Activated CD8-positive, alpha-beta T cell treated with anti-CD3 and anti-CD28 coated beads for 36 hours (primary cell): ENCODE measurements at regions of chr15 and their contacts with region 1.

Region 1: DNA sequence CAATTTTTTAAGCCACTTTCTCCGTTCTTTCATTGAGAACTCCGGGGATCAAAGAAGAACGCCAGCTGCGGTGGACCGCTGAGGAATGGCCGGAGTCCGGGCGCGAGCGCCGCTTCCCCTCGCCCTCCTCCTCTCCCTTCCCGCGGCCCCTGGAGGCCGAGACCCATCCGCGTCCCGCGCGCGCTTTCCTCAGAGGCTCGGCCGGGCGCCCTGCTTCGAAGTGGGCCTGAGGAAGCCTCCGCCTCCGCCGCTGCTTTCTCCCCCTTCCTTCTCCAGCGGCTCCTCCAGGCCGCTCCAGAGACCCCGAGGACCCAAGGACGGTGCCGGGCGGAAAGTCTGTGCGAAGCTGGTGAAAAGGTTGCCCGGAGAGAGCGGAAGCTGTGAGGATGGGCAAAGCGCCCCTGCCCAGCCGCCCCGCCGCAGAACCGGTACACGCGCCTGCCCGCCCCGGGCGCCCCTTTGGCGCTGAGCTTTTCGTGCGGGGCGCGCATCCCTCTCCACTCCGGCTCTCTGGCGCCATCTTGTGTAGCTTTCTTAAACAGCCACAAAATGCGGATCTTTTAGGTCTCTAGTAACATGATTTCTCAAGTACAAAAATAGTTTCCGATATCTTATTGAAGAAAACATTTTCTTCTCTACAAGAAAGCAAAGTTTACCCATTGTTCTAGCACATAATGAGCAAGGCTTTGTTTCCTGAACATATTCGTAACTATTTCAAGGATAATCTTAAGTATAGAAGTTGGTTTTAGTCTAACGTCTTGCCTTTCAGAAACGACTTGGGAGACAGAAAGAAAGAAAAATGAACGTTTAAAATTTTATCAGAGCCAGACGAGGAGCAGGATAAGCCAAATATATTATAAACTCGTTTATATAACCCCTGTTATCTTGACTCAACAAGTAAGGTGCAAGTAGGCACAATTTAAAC is 59.2 kb upstream of the FAM174B start:
- DNase-seq: peak; percentile 83
- ATAC-seq: peak; percentile 92
- H3K4me3 Mint-ChIP-seq: peak overlapping the region; percentile 55
- H3K27ac Mint-ChIP-seq: no peak overlapping the region
- H3K4me1 Mint-ChIP-seq: peaks cover 5% of the 10 kb centered on the region
- H3K27me3 Mint-ChIP-seq: peaks cover 15% of the 10 kb centered on the region
- CTCF ChIP-seq: peak; percentile 98

Region 2: DNA sequence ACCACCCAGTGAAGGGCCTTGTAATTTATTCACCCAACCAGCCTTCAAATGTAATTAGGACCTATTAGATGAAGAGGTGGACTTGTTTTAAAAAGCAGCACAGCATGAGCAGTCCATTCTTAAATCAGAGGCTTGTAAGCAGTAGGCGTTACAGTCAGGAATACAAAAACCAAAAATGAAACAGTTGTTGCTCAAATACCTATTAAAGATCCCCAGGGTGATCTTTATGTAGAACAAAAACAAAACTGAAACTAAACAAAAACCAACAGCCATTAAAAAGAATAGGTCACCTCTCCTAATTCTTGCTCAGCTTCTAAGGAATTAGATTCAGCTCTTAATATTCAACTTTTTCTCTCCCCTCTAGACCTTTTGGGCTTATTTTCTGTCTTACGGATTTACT is 426.0 kb before region 1 on chr15:
- CTCF ChIA-PET with region 1: no interaction called
- POLR2A ChIA-PET with region 1: no interaction called
- intact Hi-C with region 1: no loop called
- DNase-seq: no peak
- ATAC-seq: no peak
- H3K4me3 Mint-ChIP-seq: no peak overlapping the region
- H3K27ac Mint-ChIP-seq: no peak overlapping the region
- H3K4me1 Mint-ChIP-seq: peaks cover 5% of the 10 kb centered on the region
- H3K27me3 Mint-ChIP-seq: peaks cover 13% of the 10 kb centered on the region
- CTCF ChIP-seq: no peak

Region 3: GRCh38 chr15:92521624-92522008 is 193.1 kb before region 1 on chr15:
- CTCF ChIA-PET with region 1: interaction called, 35 read pairs
- POLR2A ChIA-PET with region 1: no interaction called
- intact Hi-C with region 1: loop called (anchors 5 kb)
- DNase-seq: peak; percentile 70
- ATAC-seq: peak; percentile 67
- H3K4me3 Mint-ChIP-seq: no peak overlapping the region
- H3K27ac Mint-ChIP-seq: no peak overlapping the region
- H3K4me1 Mint-ChIP-seq: peaks cover 3% of the 10 kb centered on the region
- H3K27me3 Mint-ChIP-seq: no peaks in the 10 kb centered on the region
- CTCF ChIP-seq: peak; percentile 63

Region 4: DNA sequence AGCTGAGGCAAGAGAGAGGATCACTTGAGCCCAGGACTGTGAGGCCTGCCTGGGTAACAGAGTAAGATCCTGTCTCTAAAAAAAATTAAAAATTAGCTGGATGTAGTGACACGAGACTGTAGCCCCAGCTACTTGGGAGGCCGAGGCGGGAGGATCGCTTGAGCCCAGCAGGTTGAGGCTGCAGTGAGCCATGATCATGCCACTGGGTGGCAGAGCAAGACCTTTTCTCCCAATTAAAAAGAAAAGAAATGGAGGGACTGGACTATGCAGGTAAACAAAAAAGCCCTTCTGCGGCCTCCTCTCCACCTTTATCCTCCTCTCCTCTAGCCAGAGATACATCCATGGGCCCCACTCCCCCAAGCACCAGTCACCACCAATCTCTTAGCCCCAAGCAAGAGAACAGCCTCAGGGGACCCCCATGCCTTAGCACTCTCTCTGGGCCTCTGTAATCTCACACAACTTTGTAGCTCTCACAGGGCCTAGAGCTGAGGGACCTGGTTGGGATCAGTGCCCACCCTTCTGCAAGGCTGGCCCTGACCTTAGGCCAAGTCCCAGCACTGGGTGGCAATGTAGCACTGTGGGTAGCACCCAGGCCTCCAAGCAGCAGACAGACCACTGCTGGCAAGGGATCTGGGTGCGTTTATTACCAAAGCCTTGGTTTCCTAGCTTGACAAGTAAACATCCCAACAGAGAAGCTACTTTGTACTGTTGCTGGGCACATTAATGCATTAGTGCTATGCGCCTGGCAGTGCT is 102.6 kb before region 1 on chr15:
- CTCF ChIA-PET with region 1: interaction called, 4 read pairs
- POLR2A ChIA-PET with region 1: no interaction called
- intact Hi-C with region 1: loop called (anchors 5 kb)
- DNase-seq: peak; percentile 26
- ATAC-seq: no peak
- H3K4me3 Mint-ChIP-seq: no peak overlapping the region
- H3K27ac Mint-ChIP-seq: no peak overlapping the region
- H3K4me1 Mint-ChIP-seq: no peaks in the 10 kb centered on the region
- H3K27me3 Mint-ChIP-seq: no peaks in the 10 kb centered on the region
- CTCF ChIP-seq: no peak